ENCODE measurements at regions of chr19 and their contacts with region 1.

Region 1: DNA sequence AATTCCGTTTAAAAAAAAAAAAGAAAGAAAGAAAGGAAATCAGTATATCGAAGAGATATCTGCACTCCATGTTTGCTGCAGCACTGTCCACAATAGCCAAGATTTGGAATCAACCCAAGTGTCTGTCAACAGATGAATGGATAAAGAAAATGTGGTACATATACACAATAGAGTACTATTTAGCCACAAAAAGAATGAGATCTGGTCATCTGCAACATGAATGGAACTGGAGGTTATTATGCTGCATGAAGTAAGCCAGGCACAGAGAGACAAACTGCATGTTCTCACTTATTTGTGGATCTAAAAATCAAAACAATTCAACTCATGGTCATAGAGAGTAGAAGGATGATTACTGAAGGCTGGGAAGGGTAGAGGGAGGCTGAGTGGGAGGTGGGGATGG is 16.3 kb downstream of the ZNF565 start:
- DNase-seq: no peak
- H3K4me3 ChIP-seq: no peak overlapping the region
- H3K27ac ChIP-seq: no peak overlapping the region
- H3K4me1 ChIP-seq: no peaks in the 10 kb centered on the region
- H3K27me3 ChIP-seq: no peaks in the 10 kb centered on the region
- CTCF ChIP-seq: no peak

Region 2: GRCh38 chr19:36114763-36115452 is 83.2 kb before region 1 on chr19 and contains the start of gene POLR2I:
- intact Hi-C with region 1: no loop called
- DNase-seq: peak; percentile 99
- H3K4me3 ChIP-seq: peak within 1 kb of the TSS; percentile 75
- H3K27ac ChIP-seq: peak within 1 kb of the TSS; percentile 68
- H3K4me1 ChIP-seq: peaks cover 13% of the 10 kb centered on the region
- H3K27me3 ChIP-seq: no peaks in the 10 kb centered on the region
- CTCF ChIP-seq: no peak
- total RNA-seq, gene POLR2I: 41.6 to 94.0 TPM

Region 3: GRCh38 chr19:36139473-36140303 is 58.4 kb before region 1 on chr19 and contains the start of gene CAPNS1:
- intact Hi-C with region 1: no loop called
- DNase-seq: peak; percentile 97
- H3K4me3 ChIP-seq: peak within 1 kb of the TSS; percentile 64
- H3K27ac ChIP-seq: peak within 1 kb of the TSS; percentile 96
- H3K4me1 ChIP-seq: peaks cover 3% of the 10 kb centered on the region
- H3K27me3 ChIP-seq: no peaks in the 10 kb centered on the region
- CTCF ChIP-seq: no peak
- total RNA-seq, gene CAPNS1: 677 to 794 TPM

Region 4: DNA sequence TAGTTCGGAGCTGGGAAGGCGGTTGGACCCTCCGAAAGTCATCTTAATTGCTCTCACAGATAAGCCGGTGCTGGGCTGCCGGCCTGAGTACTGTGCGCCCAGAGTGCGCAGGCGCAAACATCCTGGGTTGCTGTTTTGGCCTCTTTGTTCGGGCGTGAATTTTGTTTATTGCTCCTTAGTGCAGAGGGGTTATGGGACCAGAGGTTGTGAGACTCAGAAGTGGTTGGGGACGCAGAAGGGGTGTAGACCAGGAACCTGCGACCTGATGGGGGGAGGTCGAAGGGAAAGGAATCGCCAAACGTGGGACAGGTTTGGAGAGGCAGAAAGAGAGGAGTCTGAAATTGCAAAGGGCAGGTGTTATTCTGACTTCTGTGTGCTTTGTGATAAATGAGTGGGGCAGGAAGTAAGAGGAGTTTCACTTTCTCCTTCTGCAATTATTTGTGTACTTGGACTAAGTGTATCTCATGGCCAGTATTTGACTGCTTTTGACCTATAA is 291.8 kb after region 1 on chr19:
- intact Hi-C with region 1: loop called (anchors 10 kb)
- DNase-seq: peak; percentile 85
- H3K4me3 ChIP-seq: peak overlapping the region; percentile 65
- H3K27ac ChIP-seq: peak overlapping the region; percentile 87
- H3K4me1 ChIP-seq: no peaks in the 10 kb centered on the region
- H3K27me3 ChIP-seq: no peaks in the 10 kb centered on the region
- CTCF ChIP-seq: no peak